ENCODE measurements at regions of chr16 and their contacts with region 1.

Region 1: GRCh38 chr16:2155091-2156021 is at the start of gene TRAF7:
- DNase-seq: peak; percentile 99
- H3K4me3 Mint-ChIP-seq: peak within 1 kb of the TSS; percentile 97
- H3K27ac Mint-ChIP-seq: peak within 1 kb of the TSS; percentile 91
- H3K4me1 Mint-ChIP-seq: peaks cover 41% of the 10 kb centered on the region
- H3K27me3 Mint-ChIP-seq: no peaks in the 10 kb centered on the region
- total RNA-seq, gene TRAF7: 102 to 104 TPM

Region 2: DNA sequence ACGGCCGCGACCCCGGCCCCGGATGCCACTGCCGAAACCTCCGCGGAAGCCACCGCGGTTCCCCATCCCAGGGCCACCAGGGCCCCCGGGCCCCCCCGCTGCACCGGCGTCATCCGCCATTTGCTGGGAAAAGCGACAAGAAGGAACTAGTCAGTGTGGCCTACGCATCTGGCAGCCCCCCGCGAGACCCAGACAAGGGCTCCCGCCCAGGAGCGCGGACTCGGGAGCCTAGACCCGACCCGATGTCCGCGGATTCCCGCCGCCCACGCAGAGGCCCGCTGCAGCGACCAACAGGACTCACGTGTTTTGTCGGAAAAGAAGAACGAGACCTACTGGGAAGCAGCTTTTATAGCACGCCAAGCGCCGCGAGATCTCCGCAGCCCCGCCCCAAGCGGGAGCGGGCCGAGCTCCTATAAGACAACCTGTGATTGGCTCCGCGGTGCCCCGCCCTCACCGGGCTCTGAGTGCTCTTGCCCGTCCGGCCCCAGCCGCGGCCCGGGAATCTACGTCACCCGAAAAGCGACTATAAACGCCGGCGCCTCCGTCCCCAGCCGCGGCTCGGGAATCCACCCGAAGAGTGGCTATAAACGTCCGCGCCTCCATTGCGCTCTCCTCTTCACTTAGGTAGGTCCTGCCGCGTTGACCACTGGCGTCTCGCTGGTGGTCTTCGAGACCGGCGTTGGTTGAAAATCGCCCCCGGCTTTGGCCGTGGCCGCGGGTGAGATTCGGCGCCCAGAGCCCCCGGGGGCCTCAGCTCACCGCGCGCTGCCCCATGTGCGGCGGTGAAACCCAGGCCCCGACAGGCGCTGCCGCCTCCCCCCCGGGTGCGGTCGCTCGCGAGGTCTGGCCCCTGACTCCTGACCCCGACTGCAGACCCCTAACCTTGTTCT is 190.6 kb before region 1 on chr16 and contains the start of gene RPS2:
- CTCF ChIA-PET with region 1: no interaction called
- intact Hi-C with region 1: loop called (anchors 1 kb)
- DNase-seq: peak; percentile 99
- H3K4me3 Mint-ChIP-seq: peak within 1 kb of the TSS; percentile 97
- H3K27ac Mint-ChIP-seq: peak within 1 kb of the TSS; percentile 95
- H3K4me1 Mint-ChIP-seq: peaks cover 42% of the 10 kb centered on the region
- H3K27me3 Mint-ChIP-seq: no peaks in the 10 kb centered on the region
- total RNA-seq, gene RPS2: 7,042 to 7,057 TPM

Region 3: GRCh38 chr16:2142942-2143877 is 12.1 kb before region 1 on chr16:
- CTCF ChIA-PET with region 1: interaction called, 20 read pairs
- intact Hi-C with region 1: no loop called
- DNase-seq: no peak
- H3K4me3 Mint-ChIP-seq: no peak overlapping the region
- H3K27ac Mint-ChIP-seq: no peak overlapping the region
- H3K4me1 Mint-ChIP-seq: peaks cover 2% of the 10 kb centered on the region
- H3K27me3 Mint-ChIP-seq: no peaks in the 10 kb centered on the region

Region 4: GRCh38 chr16:2223375-2224182 is 68.2 kb after region 1 on chr16 and contains the start of gene E4F1:
- CTCF ChIA-PET with region 1: no interaction called
- intact Hi-C with region 1: loop called (anchors 1 kb)
- DNase-seq: peak; percentile 100
- H3K4me3 Mint-ChIP-seq: peak within 1 kb of the TSS; percentile 78
- H3K27ac Mint-ChIP-seq: peak within 1 kb of the TSS; percentile 18
- H3K4me1 Mint-ChIP-seq: peaks cover 22% of the 10 kb centered on the region
- H3K27me3 Mint-ChIP-seq: no peaks in the 10 kb centered on the region
- total RNA-seq, gene E4F1: 21.2 to 21.7 TPM

Region 5: GRCh38 chr16:2278272-2278608 is 122.9 kb after region 1 on chr16:
- CTCF ChIA-PET with region 1: no interaction called
- intact Hi-C with region 1: no loop called
- DNase-seq: no peak
- H3K4me3 Mint-ChIP-seq: no peak overlapping the region
- H3K27ac Mint-ChIP-seq: no peak overlapping the region
- H3K4me1 Mint-ChIP-seq: no peaks in the 10 kb centered on the region
- H3K27me3 Mint-ChIP-seq: no peaks in the 10 kb centered on the region

Region 6: DNA sequence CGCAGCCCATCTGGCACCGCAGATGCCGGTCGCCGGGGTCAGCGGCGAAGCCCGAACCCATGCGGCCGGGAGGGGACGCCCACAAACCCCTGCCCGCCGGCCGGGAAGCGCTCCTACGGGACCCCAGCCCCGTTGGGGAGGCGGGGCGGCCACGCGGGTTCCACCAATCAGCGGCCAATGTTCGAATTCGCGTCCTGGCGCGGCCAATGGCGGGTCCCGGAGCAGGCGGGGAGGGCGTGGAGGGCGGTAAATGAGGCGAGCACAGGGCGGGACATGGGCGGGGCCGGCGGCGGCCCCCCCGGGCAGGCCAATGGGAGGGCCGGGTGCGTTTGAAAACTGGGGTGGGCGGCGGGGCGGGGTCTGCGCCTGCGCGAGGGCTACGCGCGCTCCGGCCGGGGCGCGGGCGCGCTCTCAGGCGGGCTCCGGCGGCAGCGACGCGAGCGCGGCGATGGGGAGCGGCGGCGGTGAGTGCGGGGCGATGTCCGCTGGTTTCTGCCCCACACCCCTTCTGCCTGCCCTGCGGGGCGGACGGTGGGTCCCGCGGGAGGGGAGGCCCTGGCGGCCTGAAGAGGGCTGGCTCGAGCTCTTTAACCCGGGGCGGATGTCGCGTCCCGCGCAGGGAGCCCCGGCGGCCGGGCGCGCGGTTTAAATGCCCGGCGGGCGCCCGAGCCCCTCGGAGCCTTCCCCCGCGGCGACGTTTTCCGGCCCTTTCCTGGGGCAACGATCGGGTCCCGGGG is 273.8 kb after region 1 on chr16 and contains the start of gene CCNF:
- CTCF ChIA-PET with region 1: no interaction called
- intact Hi-C with region 1: loop called (anchors 1 kb)
- DNase-seq: peak; percentile 98
- H3K4me3 Mint-ChIP-seq: peak within 1 kb of the TSS; percentile 94
- H3K27ac Mint-ChIP-seq: peak within 1 kb of the TSS; percentile 81
- H3K4me1 Mint-ChIP-seq: peaks cover 16% of the 10 kb centered on the region
- H3K27me3 Mint-ChIP-seq: peaks cover 4% of the 10 kb centered on the region
- total RNA-seq, gene CCNF: 73.5 to 74.5 TPM

Region 7: GRCh38 chr16:2905431-2906387 is 750.4 kb after region 1 on chr16:
- CTCF ChIA-PET with region 1: no interaction called
- intact Hi-C with region 1: loop called (anchors 10 kb)
- DNase-seq: peak; percentile 99
- H3K4me3 Mint-ChIP-seq: peak overlapping the region; percentile 90
- H3K27ac Mint-ChIP-seq: no peak overlapping the region
- H3K4me1 Mint-ChIP-seq: peaks cover 18% of the 10 kb centered on the region
- H3K27me3 Mint-ChIP-seq: no peaks in the 10 kb centered on the region